Heart right ventricle (tissue), 16 donors: ENCODE measurements at regions of chr6 and their contacts with region 1.

Region 1: DNA sequence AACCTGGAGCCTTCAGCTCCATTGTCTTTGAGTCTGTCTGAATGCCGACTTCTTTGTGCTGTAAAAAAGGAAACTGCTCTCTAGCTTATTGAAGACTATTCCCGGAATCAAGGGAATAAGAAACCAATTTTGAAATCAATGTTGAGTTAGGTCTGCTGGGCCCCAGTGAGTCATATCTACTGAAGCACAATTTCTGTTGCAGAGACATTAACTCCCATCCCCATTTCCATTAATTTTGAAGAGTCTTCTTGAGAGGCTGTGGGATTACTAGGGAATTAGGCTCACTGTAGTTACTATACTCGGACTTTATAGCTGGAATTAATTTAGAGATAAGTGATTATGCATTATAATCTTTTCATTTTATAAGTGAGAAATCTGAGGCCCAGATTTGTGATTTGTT is 116.7 kb downstream of the SLC35F1 start:
- DNase-seq: no peak
- ATAC-seq: no peak
- H3K4me3 ChIP-seq: no peak overlapping the region
- H3K27ac ChIP-seq: no peak overlapping the region
- H3K4me1 ChIP-seq: no peaks in the 10 kb centered on the region
- H3K27me3 ChIP-seq: no peaks in the 10 kb centered on the region
- CTCF ChIP-seq: no peak

Region 2: GRCh38 chr6:118800394-118801071 is 776.8 kb after region 1 on chr6:
- intact Hi-C with region 1: loop called in 1 of 10 experiments (anchors 5 kb)
- DNase-seq: peak; percentile 25 to 88
- ATAC-seq: peak; percentile 58 to 94 (median 88)
- H3K4me3 ChIP-seq: peak overlapping the region in 5 of 10 donors; percentile 17 to 25 (median 18)
- H3K27ac ChIP-seq: no peak overlapping the region
- H3K4me1 ChIP-seq: peaks cover 3 to 11% (median 9%) of the 10 kb centered on the region in 9 donors
- H3K27me3 ChIP-seq: no peaks in the 10 kb centered on the region
- CTCF ChIP-seq: peak; percentile 65 to 93 (median 88)